Activated CD4-positive, alpha-beta memory T cell treated with anti-CD3 and anti-CD28 coated beads, Interleukin-2, amount 10 ng/mL, durations not matched to agents 7 days and 5 days (primary cell): ENCODE measurements at regions of chr2 and their contacts with region 1.

Region 1: GRCh38 chr2:161954103-161954502 is 119.9 kb downstream of the DPP4 start:
- DNase-seq: peak; percentile 27
- H3K4me3 Mint-ChIP-seq: no peak overlapping the region
- H3K27ac Mint-ChIP-seq: peak overlapping the region; percentile 89
- H3K4me1 Mint-ChIP-seq: peaks cover 70% of the 10 kb centered on the region
- H3K27me3 Mint-ChIP-seq: no peaks in the 10 kb centered on the region

Region 2: GRCh38 chr2:161983866-161984265 is 29.8 kb after region 1 on chr2:
- CTCF ChIA-PET with region 1: interaction called, 3 read pairs
- POLR2A ChIA-PET with region 1: interaction called, 45 read pairs
- DNase-seq: no peak
- H3K4me3 Mint-ChIP-seq: no peak overlapping the region
- H3K27ac Mint-ChIP-seq: no peak overlapping the region
- H3K4me1 Mint-ChIP-seq: peaks cover 40% of the 10 kb centered on the region
- H3K27me3 Mint-ChIP-seq: no peaks in the 10 kb centered on the region

Region 3: GRCh38 chr2:162058973-162059668 is 105.0 kb after region 1 on chr2:
- CTCF ChIA-PET with region 1: interaction called, 4 read pairs
- POLR2A ChIA-PET with region 1: interaction called, 40 read pairs
- DNase-seq: peak; percentile 29
- H3K4me3 Mint-ChIP-seq: peak overlapping the region; percentile 72
- H3K27ac Mint-ChIP-seq: peak overlapping the region; percentile 94
- H3K4me1 Mint-ChIP-seq: peaks cover 89% of the 10 kb centered on the region
- H3K27me3 Mint-ChIP-seq: no peaks in the 10 kb centered on the region